AG04450 (cell line): ENCODE measurements at regions of chr16 and their contacts with region 1.

Region 1: GRCh38 chr16:66728117-66728787 is 23.2 kb downstream of the DYNC1LI2 start:
- DNase-seq: no peak
- H3K4me3 ChIP-seq: no peak overlapping the region
- H3K27ac ChIP-seq: no peak overlapping the region
- H3K27me3 ChIP-seq: no peaks in the 10 kb centered on the region
- CTCF ChIP-seq: peak; percentile 66

Region 2: DNA sequence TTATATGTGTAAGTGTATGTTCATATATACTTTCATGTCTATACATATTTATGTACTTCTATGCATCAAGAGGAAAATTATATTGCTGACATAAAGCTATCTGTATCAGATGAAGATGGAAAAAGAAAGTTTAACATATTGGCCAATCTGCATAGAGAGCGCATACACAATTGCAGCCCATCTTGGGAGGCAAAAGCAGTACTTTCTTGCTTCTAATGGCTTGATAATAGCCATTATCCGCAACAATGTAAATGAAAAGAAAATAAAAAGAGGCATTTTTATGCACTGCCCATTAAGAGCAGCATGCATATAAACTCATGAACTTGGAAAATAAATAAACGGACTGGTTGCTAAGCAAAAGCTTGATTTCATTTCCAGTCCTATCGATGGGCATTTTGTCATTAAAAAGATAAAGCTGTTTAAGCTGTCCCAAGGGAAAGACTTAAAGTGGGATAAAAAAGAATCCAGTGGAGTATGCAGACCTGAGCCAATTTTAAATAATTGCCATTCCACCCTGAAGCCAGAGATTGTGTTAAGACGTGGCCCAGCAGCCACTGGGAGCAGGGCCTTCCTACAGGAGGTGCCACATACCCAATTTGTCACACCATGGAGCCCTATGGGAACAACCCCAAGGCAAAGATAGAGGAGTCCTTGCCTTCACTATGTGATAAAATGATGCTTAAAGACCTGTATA is 1422.8 kb before region 1 on chr16:
- CTCF ChIA-PET with region 1: no interaction called
- POLR2A ChIA-PET with region 1: no interaction called
- DNase-seq: no peak
- H3K4me3 ChIP-seq: no peak overlapping the region
- H3K27ac ChIP-seq: no peak overlapping the region
- H3K27me3 ChIP-seq: no peaks in the 10 kb centered on the region
- CTCF ChIP-seq: no peak

Region 3: GRCh38 chr16:66717112-66717675 is 11.1 kb before region 1 on chr16:
- CTCF ChIA-PET with region 1: interaction called, 27 read pairs
- POLR2A ChIA-PET with region 1: no interaction called
- DNase-seq: peak; percentile 45
- H3K4me3 ChIP-seq: no peak overlapping the region
- H3K27ac ChIP-seq: peak overlapping the region; percentile 75
- H3K27me3 ChIP-seq: no peaks in the 10 kb centered on the region
- CTCF ChIP-seq: peak; percentile 77

Region 4: DNA sequence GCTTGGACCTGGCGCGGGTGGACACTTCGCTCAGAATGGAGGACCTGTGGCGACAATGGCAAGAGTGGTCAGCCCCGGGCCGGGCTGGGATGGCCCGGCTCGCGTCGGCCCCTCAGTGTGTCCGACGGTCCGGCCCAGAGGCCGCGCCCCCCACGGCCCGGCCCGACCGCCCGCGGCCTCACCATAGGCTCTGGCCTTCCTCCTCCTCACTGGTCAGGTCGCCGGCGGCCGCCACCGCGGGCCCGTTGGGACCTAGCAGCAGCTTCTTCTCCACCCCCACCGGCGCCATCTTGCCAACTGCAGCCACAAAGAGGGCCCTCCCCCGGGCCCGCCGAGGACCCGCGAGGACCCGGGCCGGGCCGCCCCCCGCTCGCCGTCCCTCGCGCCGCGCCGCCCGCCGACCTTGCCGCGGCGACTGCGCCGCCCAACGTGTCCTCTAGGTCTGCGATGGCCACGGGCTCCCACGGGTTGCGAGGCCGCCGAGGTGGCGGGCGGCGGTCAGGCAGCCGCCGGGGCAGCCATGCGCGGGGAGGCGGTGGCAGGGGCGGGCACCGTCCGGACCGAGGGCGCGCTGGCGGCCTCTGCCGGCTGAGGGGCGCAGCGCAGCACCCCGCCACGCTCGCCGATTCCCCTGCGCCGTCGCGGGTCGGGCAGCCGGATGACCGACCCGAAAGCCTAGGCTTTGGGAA is 23.2 kb after region 1 on chr16 and contains the start of gene DYNC1LI2:
- CTCF ChIA-PET with region 1: interaction called, 17 read pairs
- POLR2A ChIA-PET with region 1: no interaction called
- DNase-seq: peak; percentile 20
- H3K4me3 ChIP-seq: peak within 1 kb of the TSS; percentile 97
- H3K27ac ChIP-seq: peak within 1 kb of the TSS; percentile 31
- H3K27me3 ChIP-seq: peaks cover 6% of the 10 kb centered on the region
- CTCF ChIP-seq: peak; percentile 58
- polyA plus RNA-seq, gene DYNC1LI2: 86.7 and 88.5 TPM in 2 replicates

Region 5: GRCh38 chr16:66786551-66786950 is 58.3 kb after region 1 on chr16:
- CTCF ChIA-PET with region 1: no interaction called
- POLR2A ChIA-PET with region 1: no interaction called
- DNase-seq: no peak
- H3K4me3 ChIP-seq: no peak overlapping the region
- H3K27ac ChIP-seq: no peak overlapping the region
- H3K27me3 ChIP-seq: peaks cover 6% of the 10 kb centered on the region
- CTCF ChIP-seq: no peak